Calu3 (cell line): ENCODE measurements at regions of chr2 and their contacts with region 1.

Region 1: GRCh38 chr2:227890495-227891079 is 19.2 kb downstream of the DAW1 start:
- DNase-seq: no peak
- H3K4me3 Mint-ChIP-seq: no peak overlapping the region
- H3K27ac Mint-ChIP-seq: no peak overlapping the region
- H3K4me1 Mint-ChIP-seq: peaks cover 9% of the 10 kb centered on the region
- H3K27me3 Mint-ChIP-seq: no peaks in the 10 kb centered on the region
- CTCF ChIP-seq: peak; percentile 62

Region 2: DNA sequence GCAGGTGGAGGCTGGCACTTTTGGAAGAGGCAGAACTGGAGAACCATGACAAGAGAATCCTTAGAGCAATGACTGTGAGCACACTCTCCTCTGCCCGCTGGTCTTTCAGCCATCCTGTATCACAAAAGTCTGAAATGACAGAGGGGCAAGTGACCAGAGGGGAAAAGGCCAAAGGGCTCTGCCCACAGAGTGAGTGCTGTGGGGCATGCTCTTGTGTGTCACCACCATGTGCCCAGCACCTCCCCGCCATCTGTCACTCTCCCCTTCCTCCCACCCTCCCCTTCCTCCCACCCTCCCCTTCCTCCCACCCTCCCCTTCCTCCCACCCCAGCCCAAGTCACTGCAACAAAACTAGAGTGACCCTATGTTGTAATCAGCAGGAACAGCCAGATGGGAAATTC is 12.8 kb after region 1 on chr2:
- CTCF ChIA-PET with region 1: interaction called, 10 read pairs
- intact Hi-C with region 1: no loop called
- DNase-seq: no peak
- H3K4me3 Mint-ChIP-seq: no peak overlapping the region
- H3K27ac Mint-ChIP-seq: no peak overlapping the region
- H3K4me1 Mint-ChIP-seq: no peaks in the 10 kb centered on the region
- H3K27me3 Mint-ChIP-seq: no peaks in the 10 kb centered on the region
- CTCF ChIP-seq: no peak

Region 3: DNA sequence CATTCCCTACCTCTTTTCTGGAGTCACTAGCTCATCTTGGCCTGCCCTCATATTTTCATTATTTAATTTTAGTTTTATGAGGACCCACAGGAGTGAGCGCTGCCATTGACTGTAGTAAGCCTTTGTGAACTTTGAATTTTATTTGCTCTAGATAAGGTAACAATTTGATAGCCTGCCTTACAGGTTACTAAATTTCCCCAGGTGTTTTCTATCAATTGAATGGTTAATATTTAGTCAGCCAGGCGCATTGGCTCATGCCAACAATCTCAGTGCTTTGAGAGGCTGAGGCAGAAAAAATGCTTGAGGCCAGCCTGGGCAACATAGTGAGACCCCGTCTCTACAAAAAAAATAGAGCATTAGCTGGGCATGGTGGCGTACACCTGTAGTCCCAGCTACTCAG is 31.1 kb after region 1 on chr2:
- CTCF ChIA-PET with region 1: interaction called, 3 read pairs
- intact Hi-C with region 1: loop called (anchors 2 kb)
- DNase-seq: no peak
- H3K4me3 Mint-ChIP-seq: no peak overlapping the region
- H3K27ac Mint-ChIP-seq: no peak overlapping the region
- H3K4me1 Mint-ChIP-seq: peaks cover 8% of the 10 kb centered on the region
- H3K27me3 Mint-ChIP-seq: no peaks in the 10 kb centered on the region
- CTCF ChIP-seq: no peak

Region 4: DNA sequence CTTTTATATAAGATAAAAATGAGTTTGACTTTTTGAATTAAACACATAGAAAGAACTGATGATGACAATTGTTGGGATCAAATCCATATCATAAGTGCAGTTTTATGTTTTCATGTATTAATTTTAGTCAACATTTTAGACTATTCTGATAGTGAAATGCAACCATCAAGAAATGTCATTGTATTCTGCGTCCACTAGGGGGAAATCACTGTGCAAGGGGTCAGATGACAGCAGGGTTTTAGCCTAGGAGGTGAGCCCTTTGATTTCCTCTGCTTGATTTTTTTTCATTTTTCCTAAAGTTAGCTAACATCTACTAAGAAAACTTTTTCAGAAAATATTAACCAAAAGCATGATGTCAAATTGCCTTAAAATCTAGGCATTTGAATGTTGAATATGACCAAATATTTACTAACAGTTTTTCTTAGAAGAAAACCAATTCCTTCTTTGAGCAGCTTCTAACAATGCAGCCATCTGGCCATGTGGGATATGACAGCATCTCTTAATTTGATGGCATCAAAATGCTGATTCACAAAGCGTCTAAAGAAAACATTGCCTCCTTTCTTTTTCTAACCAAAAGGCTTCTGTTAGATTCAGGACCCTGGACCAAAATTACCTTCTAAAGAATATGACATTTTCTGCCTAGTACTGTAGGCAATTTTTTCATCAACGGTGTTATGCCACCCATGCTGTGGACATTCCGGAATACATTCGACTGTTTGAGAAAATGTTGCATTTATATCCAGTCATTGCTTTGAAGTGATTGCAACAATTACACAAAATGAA is 149.4 kb after region 1 on chr2:
- CTCF ChIA-PET with region 1: interaction called, 3 read pairs
- intact Hi-C with region 1: loop called (anchors 1 kb)
- DNase-seq: peak; percentile 19
- H3K4me3 Mint-ChIP-seq: no peak overlapping the region
- H3K27ac Mint-ChIP-seq: no peak overlapping the region
- H3K4me1 Mint-ChIP-seq: peaks cover 10% of the 10 kb centered on the region
- H3K27me3 Mint-ChIP-seq: no peaks in the 10 kb centered on the region
- CTCF ChIP-seq: peak; percentile 67

Region 5: DNA sequence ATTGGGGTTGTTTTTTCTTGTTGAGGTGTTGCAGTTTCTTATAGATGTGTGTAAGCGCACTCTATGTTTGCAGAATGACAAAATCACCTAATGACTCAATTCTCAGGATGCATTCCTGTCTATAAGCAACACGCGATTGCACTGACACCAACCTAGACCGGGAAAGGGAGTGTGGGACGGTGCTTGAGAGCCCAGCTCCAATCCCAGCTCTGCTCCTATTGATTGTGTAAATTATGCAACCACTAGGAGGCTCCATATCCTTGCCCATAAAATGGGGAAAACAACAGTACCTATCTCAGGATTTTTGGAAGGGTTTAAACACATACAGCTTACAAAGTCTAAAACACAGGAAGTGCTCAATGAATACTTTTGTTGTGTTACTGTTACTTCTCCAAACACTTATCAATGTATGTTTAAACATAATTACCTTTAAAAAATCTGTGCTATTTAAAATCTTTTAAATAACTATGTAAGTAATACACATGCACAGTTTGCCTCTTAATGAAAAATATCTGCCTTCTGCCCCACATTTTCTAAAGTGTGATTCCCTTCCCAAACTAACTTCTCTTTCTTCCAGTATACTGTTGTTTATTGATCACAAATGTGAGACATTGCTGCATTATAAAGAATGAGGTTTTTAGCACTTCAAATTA is 158.4 kb after region 1 on chr2:
- CTCF ChIA-PET with region 1: interaction called, 6 read pairs
- intact Hi-C with region 1: loop called (anchors 2 kb)
- DNase-seq: peak; percentile 66
- H3K4me3 Mint-ChIP-seq: no peak overlapping the region
- H3K27ac Mint-ChIP-seq: no peak overlapping the region
- H3K4me1 Mint-ChIP-seq: peaks cover 16% of the 10 kb centered on the region
- H3K27me3 Mint-ChIP-seq: no peaks in the 10 kb centered on the region
- CTCF ChIP-seq: peak; percentile 66

Region 6: GRCh38 chr2:228303946-228304345 is 413.4 kb after region 1 on chr2:
- CTCF ChIA-PET with region 1: no interaction called
- intact Hi-C with region 1: loop called (anchors 10 kb)
- DNase-seq: no peak
- H3K4me3 Mint-ChIP-seq: no peak overlapping the region
- H3K27ac Mint-ChIP-seq: no peak overlapping the region
- H3K4me1 Mint-ChIP-seq: no peaks in the 10 kb centered on the region
- H3K27me3 Mint-ChIP-seq: no peaks in the 10 kb centered on the region
- CTCF ChIP-seq: no peak

Region 7: DNA sequence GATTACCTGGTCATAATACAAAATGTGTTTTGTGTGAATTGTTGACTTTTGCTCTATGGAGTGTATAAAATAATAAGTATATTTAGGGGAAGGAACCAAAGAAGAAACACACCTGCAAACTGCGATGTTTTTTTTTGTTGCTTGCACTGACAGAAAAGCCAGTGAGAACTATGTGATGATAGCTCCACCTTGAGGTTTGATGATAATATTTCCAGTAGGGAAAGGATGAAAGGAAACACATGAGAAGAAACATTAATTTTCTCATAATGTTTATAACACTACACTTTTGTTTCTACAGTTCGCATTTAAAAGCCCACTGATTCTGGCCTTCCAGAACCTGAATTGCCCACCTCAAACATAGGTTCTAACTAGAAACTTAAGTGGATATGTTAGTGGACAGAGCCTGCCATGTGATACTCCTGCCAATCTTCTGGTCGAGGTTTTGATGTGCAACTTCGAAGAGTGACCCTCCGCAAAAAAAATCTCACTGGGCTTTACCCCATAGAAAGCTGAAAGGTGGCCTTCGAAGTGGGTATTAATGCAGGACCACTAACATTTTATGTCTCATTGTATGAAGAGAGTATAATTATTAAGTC is 767.3 kb after region 1 on chr2:
- CTCF ChIA-PET with region 1: interaction called, 3 read pairs
- intact Hi-C with region 1: loop called (anchors 1 kb)
- DNase-seq: peak; percentile 29
- H3K4me3 Mint-ChIP-seq: no peak overlapping the region
- H3K27ac Mint-ChIP-seq: no peak overlapping the region
- H3K4me1 Mint-ChIP-seq: peaks cover 19% of the 10 kb centered on the region
- H3K27me3 Mint-ChIP-seq: no peaks in the 10 kb centered on the region
- CTCF ChIP-seq: no peak